CD8-positive, alpha-beta T cell (primary cell): ENCODE measurements at regions of chr6 and their contacts with region 1.

Region 1: DNA sequence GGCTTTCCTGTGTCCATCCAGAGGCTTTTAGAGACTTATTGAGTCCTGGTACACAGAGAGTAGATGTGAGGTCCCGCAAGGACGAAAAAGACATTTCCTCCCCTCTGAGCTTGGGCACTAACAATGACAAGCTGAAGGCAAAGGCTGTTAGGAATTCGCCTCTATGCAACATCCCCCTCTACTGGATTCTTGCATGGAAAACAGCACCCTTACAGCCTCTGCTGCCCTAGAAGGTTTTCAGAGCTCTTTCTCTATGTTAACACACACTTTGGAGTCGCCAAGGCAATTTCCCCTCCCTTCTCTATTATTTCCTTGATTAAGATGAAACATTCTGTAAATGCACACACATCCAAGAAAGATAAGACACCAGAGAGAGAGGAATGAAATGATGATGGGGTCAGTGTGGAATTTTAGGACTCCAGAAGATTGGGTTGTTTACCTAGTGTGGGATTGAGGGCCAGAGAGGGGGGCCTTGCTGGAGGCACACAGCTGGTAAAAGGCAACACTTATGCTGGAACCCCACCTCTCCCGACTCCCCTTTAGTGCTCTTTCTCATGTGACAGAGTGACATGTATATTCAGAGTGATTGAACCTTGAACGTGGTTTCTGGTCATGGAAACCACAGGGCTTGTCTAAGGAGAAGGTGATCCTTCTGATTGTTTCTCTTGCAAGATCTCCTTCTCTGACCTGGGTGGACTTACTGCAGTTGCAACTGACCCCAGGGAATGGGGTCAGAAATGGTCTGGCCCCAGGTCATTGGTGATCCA is 300.7 kb downstream of the CLIC5 start:
- DNase-seq: peak; percentile 12 to 81 (median 48)
- ATAC-seq: peak; percentile 83
- H3K4me3 ChIP-seq: no peak overlapping the region
- H3K4me3 Mint-ChIP-seq: no peak overlapping the region
- H3K27ac ChIP-seq: no peak overlapping the region
- H3K27ac Mint-ChIP-seq: no peak overlapping the region
- H3K4me1 ChIP-seq: peaks cover 5% of the 10 kb centered on the region
- H3K4me1 Mint-ChIP-seq: peaks cover 12% of the 10 kb centered on the region
- H3K27me3 ChIP-seq: no peaks in the 10 kb centered on the region
- H3K27me3 Mint-ChIP-seq: no peaks in the 10 kb centered on the region
- CTCF ChIP-seq: peak; percentile 72

Region 2: GRCh38 chr6:44593539-44593944 is 1121.4 kb before region 1 on chr6:
- CTCF ChIA-PET with region 1: interaction called, 14 read pairs
- POLR2A ChIA-PET with region 1: no interaction called
- intact Hi-C with region 1: loop called (anchors 1 kb)
- DNase-seq: peak; percentile 25 to 73 (median 65)
- ATAC-seq: peak; percentile 56
- H3K4me3 ChIP-seq: no peak overlapping the region
- H3K4me3 Mint-ChIP-seq: no peak overlapping the region
- H3K27ac ChIP-seq: no peak overlapping the region
- H3K27ac Mint-ChIP-seq: no peak overlapping the region
- H3K4me1 ChIP-seq: no peaks in the 10 kb centered on the region
- H3K4me1 Mint-ChIP-seq: peaks cover 2% of the 10 kb centered on the region
- H3K27me3 ChIP-seq: no peaks in the 10 kb centered on the region
- H3K27me3 Mint-ChIP-seq: peaks cover 7% of the 10 kb centered on the region
- CTCF ChIP-seq: peak; percentile 59

Region 3: GRCh38 chr6:44771647-44772415 is 943.1 kb before region 1 on chr6:
- CTCF ChIA-PET with region 1: interaction called, 3 read pairs
- POLR2A ChIA-PET with region 1: no interaction called
- intact Hi-C with region 1: loop called in 1 of 2 experiments (anchors 2 kb)
- DNase-seq: no peak
- ATAC-seq: no peak
- H3K4me3 ChIP-seq: no peak overlapping the region
- H3K4me3 Mint-ChIP-seq: no peak overlapping the region
- H3K27ac ChIP-seq: no peak overlapping the region
- H3K27ac Mint-ChIP-seq: no peak overlapping the region
- H3K4me1 ChIP-seq: peaks cover 3% of the 10 kb centered on the region
- H3K4me1 Mint-ChIP-seq: peaks cover 9% of the 10 kb centered on the region
- H3K27me3 ChIP-seq: no peaks in the 10 kb centered on the region
- H3K27me3 Mint-ChIP-seq: peaks cover 2% of the 10 kb centered on the region
- CTCF ChIP-seq: no peak

Region 4: DNA sequence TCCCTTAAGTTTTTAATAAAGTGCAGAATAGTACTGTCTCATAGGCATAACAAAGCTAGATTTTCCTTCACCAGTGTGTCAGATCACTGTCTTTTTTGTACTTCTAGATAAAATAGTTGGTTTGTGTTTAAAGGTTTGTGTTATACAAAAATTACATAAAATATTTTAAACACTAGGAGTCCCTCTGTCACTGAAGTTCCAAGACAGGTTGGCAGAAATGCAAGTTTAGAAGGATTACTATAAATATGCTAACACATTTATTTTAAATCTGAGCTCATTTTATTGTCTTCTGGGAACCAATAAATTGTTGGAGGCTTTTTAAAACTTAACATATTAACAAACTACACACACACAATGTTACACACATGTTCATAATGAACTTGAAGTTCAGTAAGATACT is 417.6 kb before region 1 on chr6:
- CTCF ChIA-PET with region 1: interaction called, 5 read pairs
- POLR2A ChIA-PET with region 1: no interaction called
- intact Hi-C with region 1: loop called in 1 of 2 experiments (anchors 2 kb)
- DNase-seq: no peak
- ATAC-seq: no peak
- H3K4me3 ChIP-seq: no peak overlapping the region
- H3K4me3 Mint-ChIP-seq: no peak overlapping the region
- H3K27ac ChIP-seq: no peak overlapping the region
- H3K27ac Mint-ChIP-seq: peak overlapping the region; percentile 37
- H3K4me1 ChIP-seq: peaks cover 24% of the 10 kb centered on the region
- H3K4me1 Mint-ChIP-seq: peaks cover 53% of the 10 kb centered on the region
- H3K27me3 ChIP-seq: no peaks in the 10 kb centered on the region
- H3K27me3 Mint-ChIP-seq: no peaks in the 10 kb centered on the region
- CTCF ChIP-seq: no peak

Region 5: GRCh38 chr6:45436544-45437438 is 278.1 kb before region 1 on chr6:
- CTCF ChIA-PET with region 1: interaction called, 14 read pairs
- POLR2A ChIA-PET with region 1: no interaction called
- intact Hi-C with region 1: no loop called
- DNase-seq: peak in 3 of 9 experiments; percentile 9 to 44 (median 34)
- ATAC-seq: peak; percentile 69
- H3K4me3 ChIP-seq: no peak overlapping the region
- H3K4me3 Mint-ChIP-seq: peak overlapping the region; percentile 38
- H3K27ac ChIP-seq: no peak overlapping the region
- H3K27ac Mint-ChIP-seq: peak overlapping the region; percentile 60
- H3K4me1 ChIP-seq: peaks cover 49% of the 10 kb centered on the region
- H3K4me1 Mint-ChIP-seq: peaks cover 66% of the 10 kb centered on the region
- H3K27me3 ChIP-seq: no peaks in the 10 kb centered on the region
- H3K27me3 Mint-ChIP-seq: no peaks in the 10 kb centered on the region
- CTCF ChIP-seq: no peak

Region 6: GRCh38 chr6:45703041-45703739 is 11.7 kb before region 1 on chr6:
- CTCF ChIA-PET with region 1: interaction called, 14 read pairs
- POLR2A ChIA-PET with region 1: interaction called, 4 read pairs
- intact Hi-C with region 1: no loop called
- DNase-seq: no peak
- ATAC-seq: no peak
- H3K4me3 ChIP-seq: no peak overlapping the region
- H3K4me3 Mint-ChIP-seq: no peak overlapping the region
- H3K27ac ChIP-seq: no peak overlapping the region
- H3K27ac Mint-ChIP-seq: no peak overlapping the region
- H3K4me1 ChIP-seq: no peaks in the 10 kb centered on the region
- H3K4me1 Mint-ChIP-seq: no peaks in the 10 kb centered on the region
- H3K27me3 ChIP-seq: no peaks in the 10 kb centered on the region
- H3K27me3 Mint-ChIP-seq: no peaks in the 10 kb centered on the region
- CTCF ChIP-seq: no peak

Region 7: DNA sequence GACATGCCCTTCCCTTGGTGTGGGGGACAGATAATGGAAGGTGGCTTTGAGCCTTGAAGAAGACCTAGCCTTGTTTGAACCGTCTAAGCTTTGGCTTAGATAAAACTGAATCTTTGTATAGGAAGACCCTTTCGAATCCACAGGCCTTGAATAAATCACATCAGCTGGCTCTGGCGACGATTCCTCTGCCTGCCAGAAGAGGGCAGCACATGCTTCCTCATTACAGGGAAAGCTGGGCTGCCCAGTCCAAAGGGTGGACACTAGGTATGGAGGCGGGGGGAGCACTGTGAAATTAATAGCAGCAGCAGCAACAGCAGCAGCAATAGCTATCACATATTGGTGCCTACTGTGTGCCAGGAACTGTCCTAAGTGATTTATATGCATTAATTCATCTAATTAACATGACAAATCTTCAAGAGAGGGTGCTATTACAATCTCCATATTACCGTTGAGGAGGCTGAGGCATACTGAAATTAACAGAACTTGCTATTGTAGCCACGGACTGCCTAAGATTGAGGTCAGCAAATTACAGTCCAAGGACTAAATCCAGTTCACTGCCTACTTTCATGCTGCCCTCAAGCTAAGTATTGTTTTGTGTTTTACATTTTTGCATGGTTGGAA is 215.6 kb after region 1 on chr6:
- CTCF ChIA-PET with region 1: no interaction called
- POLR2A ChIA-PET with region 1: no interaction called
- intact Hi-C with region 1: no loop called
- DNase-seq: peak; percentile 16 to 73 (median 57)
- ATAC-seq: peak; percentile 40
- H3K4me3 ChIP-seq: no peak overlapping the region
- H3K4me3 Mint-ChIP-seq: no peak overlapping the region
- H3K27ac ChIP-seq: no peak overlapping the region
- H3K27ac Mint-ChIP-seq: no peak overlapping the region
- H3K4me1 ChIP-seq: no peaks in the 10 kb centered on the region
- H3K4me1 Mint-ChIP-seq: no peaks in the 10 kb centered on the region
- H3K27me3 ChIP-seq: no peaks in the 10 kb centered on the region
- H3K27me3 Mint-ChIP-seq: no peaks in the 10 kb centered on the region
- CTCF ChIP-seq: peak; percentile 89